ENCODE measurements at regions of chr15 and their contacts with region 1.

Region 1: GRCh38 chr15:101294731-101295606 is at the start of gene SNRPA1:
- DNase-seq: peak; percentile 83
- ATAC-seq: peak; percentile 83
- H3K4me3 ChIP-seq: peak within 1 kb of the TSS; percentile 57 to 96
- H3K27ac ChIP-seq: peak within 1 kb of the TSS; percentile 96
- H3K4me1 ChIP-seq: peaks cover 15 to 33% of the 10 kb centered on the region in 2 experiments
- H3K27me3 ChIP-seq: no peaks in the 10 kb centered on the region
- CTCF ChIP-seq: no peak
- POLR2A ChIP-seq: peak; percentile 83
- RAD21 ChIP-seq: no peak
- total RNA-seq, gene SNRPA1: 104 TPM

Region 2: DNA sequence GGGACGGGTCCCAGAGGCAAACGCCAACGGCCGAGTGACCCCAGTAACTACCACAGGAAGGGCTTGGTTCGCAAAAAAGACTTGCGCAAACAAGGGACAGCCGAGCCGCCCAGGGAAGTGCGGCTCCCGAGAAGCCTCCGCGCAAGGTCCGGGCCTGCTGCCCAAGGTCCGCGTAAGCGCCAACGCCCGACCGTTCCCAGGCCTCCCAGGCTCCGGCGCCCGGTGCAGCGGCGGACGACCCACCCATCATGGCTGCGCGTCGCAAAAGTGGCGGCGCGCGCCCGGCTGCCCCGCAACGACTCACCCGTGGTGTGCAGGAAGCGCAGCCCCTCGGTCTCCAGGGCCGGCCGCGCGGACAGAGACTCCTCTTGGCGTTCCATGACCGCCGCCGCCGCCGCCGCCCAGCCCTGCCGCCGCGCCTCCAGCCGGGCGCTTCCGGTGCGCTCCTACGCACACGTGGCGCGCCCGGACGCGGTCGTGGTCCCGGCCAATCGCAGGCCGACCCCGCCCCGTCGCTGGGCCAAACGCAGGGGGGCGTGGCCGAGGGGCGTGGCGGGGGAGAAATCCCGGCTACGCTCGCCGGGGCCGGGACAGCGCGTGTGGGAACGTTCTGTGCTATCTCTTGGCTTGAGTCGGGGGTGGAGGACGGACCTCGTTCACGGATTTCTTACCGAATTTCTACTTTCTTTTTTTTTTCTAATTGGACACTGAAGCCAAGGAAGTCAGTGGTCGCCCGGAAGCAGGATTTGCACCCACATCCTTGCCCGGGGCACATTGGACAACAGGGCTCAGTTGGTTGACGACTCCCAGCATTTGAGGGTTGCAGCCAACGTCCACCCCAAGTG is 17.7 kb before region 1 on chr15 and contains the start of gene SELENOS:
- CTCF ChIA-PET with region 1: no interaction called
- POLR2A ChIA-PET with region 1: no interaction called
- RAD21 ChIA-PET with region 1: no interaction called
- intact Hi-C with region 1: no loop called
- DNase-seq: peak; percentile 65
- ATAC-seq: peak; percentile 93
- H3K4me3 ChIP-seq: peak within 1 kb of the TSS; percentile 83 to 94
- H3K27ac ChIP-seq: peak within 1 kb of the TSS; percentile 77
- H3K4me1 ChIP-seq: peaks cover 2 to 12% of the 10 kb centered on the region in 2 experiments; a peak in 3 of 4 replicates
- H3K27me3 ChIP-seq: no peaks in the 10 kb centered on the region
- CTCF ChIP-seq: no peak
- POLR2A ChIP-seq: peak; percentile 34
- RAD21 ChIP-seq: no peak
- total RNA-seq, gene SELENOS: 45.6 TPM

Region 3: GRCh38 chr15:101307048-101307896 is 12.3 kb after region 1 on chr15:
- CTCF ChIA-PET with region 1: no interaction called
- POLR2A ChIA-PET with region 1: no interaction called
- RAD21 ChIA-PET with region 1: no interaction called
- intact Hi-C with region 1: no loop called
- DNase-seq: no peak
- ATAC-seq: 0 out of 2 replicates have a peak, but pooled peaks have one; percentile 18
- H3K4me3 ChIP-seq: no peak overlapping the region
- H3K27ac ChIP-seq: no peak overlapping the region
- H3K4me1 ChIP-seq: no peaks in the 10 kb centered on the region
- H3K27me3 ChIP-seq: no peaks in the 10 kb centered on the region
- CTCF ChIP-seq: no peak
- POLR2A ChIP-seq: no peak
- RAD21 ChIP-seq: no peak

Region 4: GRCh38 chr15:101501703-101502373 is 206.9 kb after region 1 on chr15:
- CTCF ChIA-PET with region 1: interaction called, 4 read pairs
- POLR2A ChIA-PET with region 1: no interaction called
- RAD21 ChIA-PET with region 1: no interaction called
- intact Hi-C with region 1: loop called (anchors 2 kb)
- DNase-seq: peak; percentile 22
- ATAC-seq: peak; percentile 98
- H3K4me3 ChIP-seq: peak overlapping the region in 1 of 2 experiments; percentile 39; a peak in 3 of 4 replicates
- H3K27ac ChIP-seq: no peak overlapping the region
- H3K4me1 ChIP-seq: peaks cover 0 to 12% of the 10 kb centered on the region in 2 experiments; a peak in 3 of 4 replicates
- H3K27me3 ChIP-seq: no peaks in the 10 kb centered on the region
- CTCF ChIP-seq: peak; percentile 47 to 82 (median 82); a peak in 5 of 6 replicates
- POLR2A ChIP-seq: no peak
- RAD21 ChIP-seq: peak; percentile 63

Region 5: DNA sequence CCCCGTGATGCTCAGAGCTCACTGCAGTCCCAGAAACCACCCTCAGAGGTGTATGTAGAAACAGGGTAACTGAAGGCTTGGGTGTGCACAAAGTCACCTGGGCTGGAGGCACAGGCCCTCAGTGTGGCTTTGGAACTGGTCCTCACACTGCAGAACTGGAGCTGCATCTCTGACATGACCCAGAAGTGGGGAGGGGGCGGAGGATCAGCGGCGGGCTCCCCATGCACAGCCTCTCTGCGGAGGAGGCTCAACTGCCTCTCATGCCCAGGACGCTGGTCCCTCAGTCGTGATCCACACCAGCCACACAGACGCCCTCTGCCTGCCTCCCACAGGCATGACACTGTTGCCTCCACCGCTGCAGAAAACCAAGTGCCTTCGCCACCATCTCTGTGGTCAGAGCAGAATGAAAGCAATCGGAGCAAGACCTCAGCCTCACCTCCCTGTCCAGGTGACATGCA is 283.5 kb after region 1 on chr15:
- CTCF ChIA-PET with region 1: interaction called, 4 read pairs
- POLR2A ChIA-PET with region 1: no interaction called
- RAD21 ChIA-PET with region 1: no interaction called
- intact Hi-C with region 1: loop called (anchors 2 kb)
- DNase-seq: peak; percentile 44
- ATAC-seq: peak; percentile 83
- H3K4me3 ChIP-seq: no peak overlapping the region
- H3K27ac ChIP-seq: no peak overlapping the region
- H3K4me1 ChIP-seq: peaks cover 11 to 44% of the 10 kb centered on the region in 2 experiments; a peak in 3 of 4 replicates
- H3K27me3 ChIP-seq: no peaks in the 10 kb centered on the region
- CTCF ChIP-seq: peak; percentile 36 to 72 (median 62); a peak in 5 of 6 replicates
- POLR2A ChIP-seq: no peak
- RAD21 ChIP-seq: peak; percentile 62

Region 6: GRCh38 chr15:101651753-101652097 is 356.8 kb after region 1 on chr15:
- CTCF ChIA-PET with region 1: interaction called, 3 read pairs
- POLR2A ChIA-PET with region 1: no interaction called
- RAD21 ChIA-PET with region 1: no interaction called
- intact Hi-C with region 1: loop called (anchors 2 kb)
- DNase-seq: no peak
- ATAC-seq: peak; percentile 71
- H3K4me3 ChIP-seq: peak overlapping the region; percentile 88 to 92
- H3K27ac ChIP-seq: peak overlapping the region; percentile 94
- H3K4me1 ChIP-seq: peaks cover 6 to 18% of the 10 kb centered on the region in 2 experiments; a peak in 2 of 4 replicates
- H3K27me3 ChIP-seq: no peaks in the 10 kb centered on the region
- CTCF ChIP-seq: no peak
- POLR2A ChIP-seq: no peak
- RAD21 ChIP-seq: no peak

Measured in HCT116 (cell line).